Posterior vena cava (tissue), 2 donors: ENCODE measurements at regions of chr17 and their contacts with region 1.

Region 1: DNA sequence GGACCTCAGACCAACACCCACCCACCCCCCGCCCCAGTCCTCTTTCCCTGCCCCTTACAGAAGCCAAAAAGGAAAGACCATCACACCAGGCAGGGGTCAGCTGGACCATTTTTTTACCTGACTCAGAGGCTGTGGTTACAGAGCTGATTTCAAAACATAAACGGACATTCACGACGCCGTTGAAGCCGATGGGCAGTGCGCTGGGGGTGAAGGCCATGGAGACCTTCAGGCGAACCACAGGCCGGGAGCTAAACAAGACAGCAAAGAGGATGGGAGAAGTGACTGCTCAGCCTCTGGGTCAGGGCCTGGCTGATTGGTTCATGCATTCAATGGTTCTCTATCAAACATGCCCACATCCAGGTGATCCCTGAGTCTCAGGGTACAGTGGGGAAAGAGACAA is 24.1 kb downstream of the HASPIN start:
- DNase-seq: no peak

Region 2: GRCh38 chr17:3710951-3711383 is 36.8 kb before region 1 on chr17:
- intact Hi-C with region 1: no loop called
- DNase-seq: no peak

Region 3: DNA sequence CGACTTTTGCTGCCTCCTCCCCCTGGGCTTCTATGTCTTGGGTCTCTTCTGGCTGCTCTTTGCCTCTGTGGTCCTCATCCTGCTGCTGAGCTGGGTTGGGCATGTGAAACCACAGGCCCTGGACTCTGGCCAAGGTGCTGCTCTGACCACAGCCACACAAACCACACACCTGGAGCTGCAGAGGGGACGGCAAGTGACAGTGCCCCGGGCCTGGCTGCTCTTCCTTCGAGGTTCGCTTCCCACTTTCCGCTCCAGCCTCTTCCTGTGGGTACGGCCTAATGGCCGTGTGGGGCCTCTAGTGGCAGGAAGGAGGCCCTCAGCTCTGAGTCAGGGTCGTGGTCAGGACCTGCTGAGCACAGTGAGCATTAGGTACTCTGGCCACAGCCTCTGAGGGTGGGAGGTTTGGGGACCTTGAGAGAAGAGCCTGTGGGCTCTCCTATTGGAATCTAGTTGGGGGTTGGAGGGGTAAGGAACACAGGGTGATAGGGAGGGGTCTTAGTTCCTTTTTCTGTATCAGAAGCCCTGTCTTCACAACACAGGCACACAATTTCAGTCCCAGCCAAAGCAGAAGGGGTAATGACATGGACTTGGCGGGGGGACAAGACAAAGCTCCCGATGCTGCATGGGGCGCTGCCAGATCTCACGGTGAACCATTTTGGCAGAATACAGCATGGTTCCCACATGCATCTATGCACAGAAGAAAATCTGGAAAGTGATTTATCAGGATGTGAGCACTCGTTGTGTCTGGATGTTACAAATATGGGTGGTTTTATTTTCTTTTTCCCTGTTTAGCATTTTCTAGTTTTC is 1186.6 kb after region 1 on chr17:
- intact Hi-C with region 1: loop called in 1 of 2 experiments (anchors 5 kb)
- DNase-seq: no peak